ENCODE measurements at regions of chr18 and their contacts with region 1.

Region 1: GRCh38 chr18:3665780-3666525 is 216.0 kb downstream of the TGIF1 start:
- DNase-seq: peak; percentile 76 to 86 (median 80)
- ATAC-seq: peak; percentile 94 to 97 (median 96)
- H3K4me3 ChIP-seq: peak overlapping the region in 2 of 3 donors; percentile 17 to 33
- H3K27ac ChIP-seq: peak overlapping the region; percentile 56 to 82 (median 68)
- H3K4me1 ChIP-seq: peaks cover 0 to 27% (median 0%) of the 10 kb centered on the region in 4 donors
- H3K27me3 ChIP-seq: no peaks in the 10 kb centered on the region
- CTCF ChIP-seq: peak; percentile 88 to 99 (median 94)
- POLR2A ChIP-seq: peak; percentile 49

Region 2: GRCh38 chr18:3281456-3282400 is 384.2 kb before region 1 on chr18:
- intact Hi-C with region 1: loop called in 1 of 2 experiments (anchors 10 kb)
- DNase-seq: no peak
- ATAC-seq: peak; percentile 84 to 92 (median 86)
- H3K4me3 ChIP-seq: no peak overlapping the region
- H3K27ac ChIP-seq: no peak overlapping the region
- H3K4me1 ChIP-seq: no peaks in the 10 kb centered on the region
- H3K27me3 ChIP-seq: no peaks in the 10 kb centered on the region
- CTCF ChIP-seq: peak; percentile 62 to 72 (median 70)
- POLR2A ChIP-seq: no peak

Region 3: GRCh38 chr18:3451183-3451988 is 214.6 kb before region 1 on chr18:
- intact Hi-C with region 1: loop called in 1 of 2 experiments (anchors 10 kb)
- DNase-seq: peak; percentile 96
- ATAC-seq: peak; percentile 28 to 55 (median 32)
- H3K4me3 ChIP-seq: peak overlapping the region; percentile 73 to 79 (median 74)
- H3K27ac ChIP-seq: peak overlapping the region; percentile 99
- H3K4me1 ChIP-seq: peaks cover 0 to 24% (median 5%) of the 10 kb centered on the region in 4 donors
- H3K27me3 ChIP-seq: no peaks in the 10 kb centered on the region
- CTCF ChIP-seq: no peak
- POLR2A ChIP-seq: peak; percentile 98

Region 4: GRCh38 chr18:3585656-3586509 is 80.1 kb before region 1 on chr18:
- intact Hi-C with region 1: loop called in 1 of 2 experiments (anchors 10 kb)
- DNase-seq: peak; percentile 87 to 91 (median 89)
- ATAC-seq: peak; percentile 99 to 100 (median 100)
- H3K4me3 ChIP-seq: no peak overlapping the region
- H3K27ac ChIP-seq: no peak overlapping the region
- H3K4me1 ChIP-seq: no peaks in the 10 kb centered on the region
- H3K27me3 ChIP-seq: no peaks in the 10 kb centered on the region
- CTCF ChIP-seq: peak; percentile 74 to 87 (median 86)
- POLR2A ChIP-seq: no peak

Region 5: DNA sequence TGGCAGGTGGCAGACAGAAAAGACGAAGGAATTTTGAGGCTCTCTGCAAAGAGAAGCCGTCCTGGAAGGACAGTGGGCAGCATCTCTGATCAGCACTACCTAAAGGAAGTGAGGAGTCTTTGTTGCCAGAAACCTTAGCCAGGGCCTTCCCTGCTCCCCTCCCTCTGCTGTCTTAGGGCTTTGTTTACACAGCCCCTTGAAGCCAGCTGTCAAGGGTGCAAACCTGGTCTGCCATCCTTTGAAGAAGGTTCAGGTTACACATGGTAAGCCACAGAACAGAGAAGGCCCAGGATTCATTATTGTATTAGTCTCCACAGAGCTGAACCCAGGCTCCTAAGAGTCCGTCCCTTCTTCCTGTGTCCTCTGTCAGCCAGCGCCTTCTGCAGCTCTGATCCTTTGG is 140.7 kb after region 1 on chr18:
- intact Hi-C with region 1: no loop called
- DNase-seq: no peak
- ATAC-seq: no peak
- H3K4me3 ChIP-seq: no peak overlapping the region
- H3K27ac ChIP-seq: no peak overlapping the region
- H3K4me1 ChIP-seq: no peaks in the 10 kb centered on the region
- H3K27me3 ChIP-seq: no peaks in the 10 kb centered on the region
- CTCF ChIP-seq: no peak
- POLR2A ChIP-seq: no peak